ENCODE measurements at regions of chr4 and their contacts with region 1.

Region 1: DNA sequence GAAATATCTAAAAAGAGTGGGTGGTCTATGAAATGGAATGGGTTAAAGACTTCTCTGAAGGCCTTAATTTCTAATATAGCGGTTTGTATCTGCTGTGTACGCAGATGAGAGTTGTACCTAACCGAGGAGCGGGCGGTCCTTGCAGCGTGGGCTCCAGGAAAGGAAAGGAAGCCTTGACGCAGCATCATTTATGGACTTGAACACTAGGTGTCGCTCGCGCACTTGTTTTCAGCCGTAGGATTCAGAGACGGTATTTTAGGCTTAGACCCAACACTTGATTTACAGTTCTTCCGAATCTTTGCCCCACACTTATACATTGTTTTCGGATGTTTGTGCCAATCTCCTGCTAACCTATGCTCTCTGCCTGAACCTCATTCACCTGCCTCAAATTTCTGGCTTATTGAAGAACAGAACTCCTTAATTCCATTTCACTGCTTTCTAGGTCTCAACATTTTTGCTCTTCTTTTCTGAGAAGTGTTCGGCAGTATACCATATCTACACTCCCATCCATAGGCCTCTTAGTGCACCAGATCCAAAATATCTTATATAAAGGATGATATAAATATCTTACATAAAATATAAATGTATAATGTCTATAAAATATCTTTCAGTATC is 48.9 kb upstream of the AADAT start:
- DNase-seq: peak; percentile 82
- H3K4me3 Mint-ChIP-seq: no peak overlapping the region
- H3K27ac Mint-ChIP-seq: no peak overlapping the region
- H3K4me1 Mint-ChIP-seq: peaks cover 5% of the 10 kb centered on the region
- H3K27me3 Mint-ChIP-seq: no peaks in the 10 kb centered on the region
- CTCF ChIP-seq: peak; percentile 87

Region 2: DNA sequence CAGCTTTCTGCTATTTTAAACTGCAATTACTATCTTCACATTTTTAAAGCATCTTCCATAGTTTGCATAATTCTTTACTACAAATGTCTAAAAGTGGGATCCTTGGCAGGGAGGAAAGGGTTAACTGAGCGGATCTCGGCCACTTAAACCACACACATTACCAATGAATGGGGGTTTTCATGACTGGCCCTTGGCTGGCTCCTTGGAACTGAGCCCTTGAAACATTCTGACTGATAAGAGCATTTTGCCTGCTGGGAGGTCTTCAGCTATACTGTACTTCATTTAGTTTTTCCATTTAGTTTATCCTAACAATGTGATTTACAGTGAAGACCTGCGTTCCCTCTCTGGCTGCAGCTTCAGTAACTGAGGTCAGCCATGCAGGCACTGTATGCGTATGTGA is 80.8 kb before region 1 on chr4:
- CTCF ChIA-PET with region 1: no interaction called
- POLR2A ChIA-PET with region 1: no interaction called
- intact Hi-C with region 1: no loop called
- DNase-seq: no peak
- H3K4me3 Mint-ChIP-seq: no peak overlapping the region
- H3K27ac Mint-ChIP-seq: no peak overlapping the region
- H3K4me1 Mint-ChIP-seq: no peaks in the 10 kb centered on the region
- H3K27me3 Mint-ChIP-seq: no peaks in the 10 kb centered on the region
- CTCF ChIP-seq: no peak

Region 3: GRCh38 chr4:170128219-170128804 is 10.4 kb before region 1 on chr4:
- CTCF ChIA-PET with region 1: interaction called, 11 read pairs
- POLR2A ChIA-PET with region 1: no interaction called
- intact Hi-C with region 1: no loop called
- DNase-seq: no peak
- H3K4me3 Mint-ChIP-seq: no peak overlapping the region
- H3K27ac Mint-ChIP-seq: no peak overlapping the region
- H3K4me1 Mint-ChIP-seq: no peaks in the 10 kb centered on the region
- H3K27me3 Mint-ChIP-seq: no peaks in the 10 kb centered on the region
- CTCF ChIP-seq: no peak

Region 4: GRCh38 chr4:170157670-170158069 is 19.0 kb after region 1 on chr4:
- CTCF ChIA-PET with region 1: interaction called, 10 read pairs
- POLR2A ChIA-PET with region 1: interaction called, 3 read pairs
- intact Hi-C with region 1: no loop called
- DNase-seq: no peak
- H3K4me3 Mint-ChIP-seq: no peak overlapping the region
- H3K27ac Mint-ChIP-seq: no peak overlapping the region
- H3K4me1 Mint-ChIP-seq: no peaks in the 10 kb centered on the region
- H3K27me3 Mint-ChIP-seq: no peaks in the 10 kb centered on the region
- CTCF ChIP-seq: no peak

Region 5: DNA sequence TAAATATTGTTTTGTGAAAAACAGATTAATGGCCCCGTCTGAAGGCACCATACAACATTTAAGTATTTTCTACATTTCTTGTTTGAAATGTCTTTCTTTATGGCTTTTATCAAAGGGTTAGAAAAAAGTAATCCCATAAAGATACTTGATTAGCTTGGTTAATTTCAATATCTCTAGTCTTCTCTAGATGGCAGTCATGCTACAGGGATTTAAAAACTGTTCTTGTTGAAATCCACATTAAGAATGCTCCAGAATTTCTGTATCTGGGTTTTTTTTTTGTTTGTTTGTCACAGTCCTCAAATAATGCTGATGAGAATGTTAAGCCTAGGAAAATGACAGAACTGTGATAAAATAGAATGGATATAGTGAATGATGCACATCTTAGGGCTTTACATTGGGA is 60.1 kb after region 1 on chr4:
- CTCF ChIA-PET with region 1: no interaction called
- POLR2A ChIA-PET with region 1: no interaction called
- intact Hi-C with region 1: loop called (anchors 5 kb)
- DNase-seq: peak; percentile 33
- H3K4me3 Mint-ChIP-seq: no peak overlapping the region
- H3K27ac Mint-ChIP-seq: no peak overlapping the region
- H3K4me1 Mint-ChIP-seq: peaks cover 6% of the 10 kb centered on the region
- H3K27me3 Mint-ChIP-seq: no peaks in the 10 kb centered on the region
- CTCF ChIP-seq: peak; percentile 30

Region 6: GRCh38 chr4:171785388-171785787 is 1646.7 kb after region 1 on chr4:
- CTCF ChIA-PET with region 1: no interaction called
- POLR2A ChIA-PET with region 1: no interaction called
- intact Hi-C with region 1: loop called (anchors 1 kb)
- DNase-seq: no peak
- H3K4me3 Mint-ChIP-seq: no peak overlapping the region
- H3K27ac Mint-ChIP-seq: no peak overlapping the region
- H3K4me1 Mint-ChIP-seq: no peaks in the 10 kb centered on the region
- H3K27me3 Mint-ChIP-seq: peaks cover 49% of the 10 kb centered on the region
- CTCF ChIP-seq: no peak

Measured in MCF 10A (cell line).